ENCODE measurements at regions of chr14 and their contacts with region 1.

Region 1: GRCh38 chr14:63510538-63510937 is 32.6 kb downstream of the PPP2R5E start:
- DNase-seq: no peak
- H3K4me3 ChIP-seq: no peak overlapping the region
- H3K4me3 Mint-ChIP-seq: no peak overlapping the region
- H3K27ac Mint-ChIP-seq: no peak overlapping the region
- H3K4me1 ChIP-seq: peaks cover 6% of the 10 kb centered on the region
- H3K4me1 Mint-ChIP-seq: peaks cover 13% of the 10 kb centered on the region
- H3K27me3 ChIP-seq: no peaks in the 10 kb centered on the region
- H3K27me3 Mint-ChIP-seq: no peaks in the 10 kb centered on the region
- CTCF ChIP-seq: no peak

Region 2: DNA sequence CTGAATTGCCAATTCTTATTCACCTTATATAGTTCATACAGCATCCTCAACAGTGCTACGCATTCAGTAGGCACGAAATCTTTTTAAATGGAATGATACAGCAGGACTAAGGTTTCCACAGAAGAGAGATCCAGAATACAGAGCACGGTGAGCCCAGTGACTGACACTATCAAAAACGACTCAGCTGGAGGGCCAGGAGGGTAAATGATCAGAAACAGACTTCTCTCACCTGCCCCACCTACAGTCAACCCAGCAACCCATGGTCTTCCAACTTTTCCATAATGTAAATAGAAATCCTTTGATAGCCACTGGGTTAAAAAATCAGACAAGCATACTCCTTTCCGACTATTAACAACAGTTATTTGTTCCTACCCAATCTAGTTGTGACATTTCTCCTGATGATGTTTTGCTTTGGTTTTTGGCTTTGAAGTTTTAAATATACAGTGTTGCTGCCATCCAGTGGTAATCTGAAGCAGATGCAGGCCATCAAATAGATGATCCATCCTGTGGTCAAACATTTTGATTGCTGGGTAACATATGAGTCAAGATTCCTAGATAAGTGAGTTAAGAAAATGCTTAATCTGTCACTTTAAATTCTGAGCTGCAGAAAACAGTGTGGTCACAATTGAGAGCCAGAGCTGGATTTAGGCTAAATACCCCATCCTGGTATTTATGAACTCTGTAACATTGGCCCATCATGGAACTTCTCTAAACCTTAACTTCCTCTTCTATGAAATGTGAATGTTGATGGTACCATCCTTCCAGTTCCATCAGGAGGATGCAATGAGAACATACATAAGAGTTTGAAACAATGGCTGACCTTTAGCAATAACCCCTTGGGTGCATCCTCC is 233.8 kb before region 1 on chr14:
- CTCF ChIA-PET with region 1: no interaction called
- POLR2A ChIA-PET with region 1: no interaction called
- intact Hi-C with region 1: no loop called
- DNase-seq: peak in 1 of 2 experiments; percentile 35
- H3K4me3 ChIP-seq: no peak overlapping the region
- H3K4me3 Mint-ChIP-seq: no peak overlapping the region
- H3K27ac Mint-ChIP-seq: no peak overlapping the region
- H3K4me1 ChIP-seq: no peaks in the 10 kb centered on the region
- H3K4me1 Mint-ChIP-seq: no peaks in the 10 kb centered on the region
- H3K27me3 ChIP-seq: no peaks in the 10 kb centered on the region
- H3K27me3 Mint-ChIP-seq: no peaks in the 10 kb centered on the region
- CTCF ChIP-seq: peak; percentile 60 to 63

Region 3: GRCh38 chr14:63465347-63465746 is 45.2 kb before region 1 on chr14:
- CTCF ChIA-PET with region 1: no interaction called
- POLR2A ChIA-PET with region 1: interaction called, 13 read pairs
- intact Hi-C with region 1: no loop called
- DNase-seq: no peak
- H3K4me3 ChIP-seq: no peak overlapping the region
- H3K4me3 Mint-ChIP-seq: no peak overlapping the region
- H3K27ac Mint-ChIP-seq: no peak overlapping the region
- H3K4me1 ChIP-seq: no peaks in the 10 kb centered on the region
- H3K4me1 Mint-ChIP-seq: peaks cover 18% of the 10 kb centered on the region
- H3K27me3 ChIP-seq: no peaks in the 10 kb centered on the region
- H3K27me3 Mint-ChIP-seq: no peaks in the 10 kb centered on the region
- CTCF ChIP-seq: no peak

Region 4: DNA sequence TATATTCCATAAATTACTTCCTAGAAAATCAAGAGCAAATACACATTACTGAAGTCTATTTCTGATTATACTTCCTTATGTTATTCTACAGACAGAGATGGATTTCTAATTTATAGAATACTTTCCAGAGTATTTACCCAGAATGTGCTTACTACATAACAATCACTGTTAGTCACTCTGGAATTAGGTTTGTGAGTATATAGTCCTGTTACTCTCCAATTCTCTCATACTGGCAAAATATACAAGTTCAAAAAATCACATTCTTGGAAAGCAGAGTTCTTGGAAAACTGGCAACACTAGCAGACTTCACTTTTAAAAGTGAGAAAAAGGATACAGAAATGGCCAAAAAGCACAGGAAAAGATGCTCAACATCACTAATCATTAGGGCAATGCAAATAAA is 25.4 kb after region 1 on chr14:
- CTCF ChIA-PET with region 1: no interaction called
- POLR2A ChIA-PET with region 1: interaction called, 18 read pairs
- intact Hi-C with region 1: no loop called
- DNase-seq: no peak
- H3K4me3 ChIP-seq: no peak overlapping the region
- H3K4me3 Mint-ChIP-seq: no peak overlapping the region
- H3K27ac Mint-ChIP-seq: no peak overlapping the region
- H3K4me1 ChIP-seq: no peaks in the 10 kb centered on the region
- H3K4me1 Mint-ChIP-seq: no peaks in the 10 kb centered on the region
- H3K27me3 ChIP-seq: no peaks in the 10 kb centered on the region
- H3K27me3 Mint-ChIP-seq: no peaks in the 10 kb centered on the region
- CTCF ChIP-seq: no peak

Region 5: DNA sequence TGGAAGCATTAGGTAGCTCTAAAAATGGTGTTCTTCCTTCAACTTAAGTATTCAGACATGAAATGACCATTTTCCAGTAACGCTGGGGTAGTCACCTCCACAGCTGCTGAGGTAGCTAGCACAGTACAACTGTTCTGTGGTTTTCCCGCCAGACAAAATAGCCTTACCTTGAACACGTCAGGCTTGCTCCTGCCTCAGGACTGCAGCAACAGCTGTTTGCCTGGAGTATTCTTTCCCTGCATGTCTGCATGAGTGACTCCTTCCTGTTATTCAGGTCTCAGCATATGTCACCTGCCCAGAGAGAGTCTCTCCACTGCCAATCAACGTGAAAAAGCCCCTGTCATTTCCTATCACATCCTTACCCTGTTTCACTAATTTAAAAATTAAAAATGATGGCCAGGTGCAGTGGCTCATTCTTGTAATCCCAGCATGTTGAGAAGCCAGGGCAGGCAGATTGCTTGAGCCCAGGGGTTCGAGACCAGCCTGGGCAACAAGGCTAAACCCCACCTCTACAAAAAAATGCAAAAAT is 93.3 kb after region 1 on chr14:
- CTCF ChIA-PET with region 1: no interaction called
- POLR2A ChIA-PET with region 1: no interaction called
- intact Hi-C with region 1: no loop called
- DNase-seq: no peak
- H3K4me3 ChIP-seq: no peak overlapping the region
- H3K4me3 Mint-ChIP-seq: no peak overlapping the region
- H3K27ac Mint-ChIP-seq: no peak overlapping the region
- H3K4me1 ChIP-seq: no peaks in the 10 kb centered on the region
- H3K4me1 Mint-ChIP-seq: no peaks in the 10 kb centered on the region
- H3K27me3 ChIP-seq: no peaks in the 10 kb centered on the region
- H3K27me3 Mint-ChIP-seq: no peaks in the 10 kb centered on the region
- CTCF ChIP-seq: no peak

Measured in Caco-2 (cell line).